Adrenal gland (tissue), 19 donors: ENCODE measurements at regions of chr9 and their contacts with region 1.

Region 1: GRCh38 chr9:131739980-131740648 is at the start of gene RAPGEF1:
- DNase-seq: peak; percentile 57 to 83 (median 68)
- H3K4me3 ChIP-seq: peak within 1 kb of the TSS in 3 of 4 donors; percentile 19 to 82 (median 29)
- H3K27ac ChIP-seq: peak within 1 kb of the TSS; percentile 47 to 99 (median 86)
- H3K4me1 ChIP-seq: peaks cover 20 to 41% of the 10 kb centered on the region in 2 donors
- H3K27me3 ChIP-seq: no peaks in the 10 kb centered on the region
- CTCF ChIP-seq: peak; percentile 34 to 100 (median 76)
- POLR2A ChIP-seq: no peak
- total RNA-seq, gene RAPGEF1: 30.7 to 136 (median 57.9) TPM

Region 2: DNA sequence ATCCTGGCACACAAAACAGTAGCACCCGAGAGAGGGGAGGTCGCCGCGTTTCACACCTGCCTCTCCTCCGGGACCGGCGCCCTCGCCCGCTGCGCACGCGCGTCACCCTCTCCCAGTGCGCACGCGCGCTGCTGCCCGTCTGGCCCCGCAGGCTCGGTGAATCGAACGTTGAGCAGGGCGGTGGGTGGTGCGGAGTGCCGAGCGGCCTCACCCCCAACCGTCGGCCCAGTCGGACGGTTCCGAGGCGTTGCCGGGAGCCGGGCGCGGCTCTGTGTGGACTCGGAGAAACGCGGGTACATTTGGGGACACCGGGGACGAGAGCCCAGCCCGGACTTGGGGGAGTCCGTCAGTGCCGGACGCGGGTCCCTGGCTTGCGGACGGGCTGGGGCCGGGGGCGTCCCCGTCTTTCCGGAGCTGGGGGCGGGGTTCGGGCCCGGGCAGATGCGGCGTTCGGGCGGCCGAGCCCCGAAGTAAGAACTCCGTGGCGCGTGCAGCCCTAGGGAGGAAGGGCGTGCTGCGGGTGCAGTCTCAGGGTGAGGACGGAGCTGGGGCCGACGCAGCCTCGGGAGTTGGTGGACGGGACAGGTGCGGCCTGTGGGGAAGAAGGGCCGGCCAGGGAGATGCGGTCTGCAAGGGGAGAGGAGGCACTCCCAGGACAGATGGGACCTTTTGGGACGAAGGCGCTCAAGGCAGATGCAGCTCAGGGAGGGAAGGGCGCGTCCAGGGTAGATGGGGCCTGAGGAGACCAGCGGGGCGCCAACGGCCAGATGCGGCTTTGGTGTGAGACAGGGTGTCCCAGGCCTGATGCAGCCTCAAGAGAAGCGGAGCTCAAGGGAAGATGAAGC is 237.1 kb before region 1 on chr9 and contains the start of gene POMT1:
- intact Hi-C with region 1: loop called in 1 of 2 experiments (anchors 10 kb)
- DNase-seq: peak; percentile 87 to 92 (median 89)
- H3K4me3 ChIP-seq: peak within 1 kb of the TSS; percentile 27 to 93 (median 91)
- H3K27ac ChIP-seq: peak within 1 kb of the TSS in 4 of 5 donors; percentile 42 to 72 (median 58)
- H3K4me1 ChIP-seq: peaks cover 9 to 11% of the 10 kb centered on the region in 2 donors
- H3K27me3 ChIP-seq: no peaks in the 10 kb centered on the region
- CTCF ChIP-seq: no peak
- POLR2A ChIP-seq: peak in 1 of 2 donors; percentile 57
- total RNA-seq, gene POMT1: 21.3 to 47.5 (median 32.5) TPM

Region 3: GRCh38 chr9:131590908-131591844 is 148.9 kb before region 1 on chr9:
- intact Hi-C with region 1: loop called (anchors 2 kb)
- DNase-seq: peak; percentile 77 to 92 (median 87)
- H3K4me3 ChIP-seq: no peak overlapping the region
- H3K27ac ChIP-seq: no peak overlapping the region
- H3K4me1 ChIP-seq: no peaks in the 10 kb centered on the region
- H3K27me3 ChIP-seq: no peaks in the 10 kb centered on the region
- CTCF ChIP-seq: peak; percentile 83 to 98 (median 94)
- POLR2A ChIP-seq: peak in 1 of 2 donors; percentile 37

Region 4: GRCh38 chr9:132814937-132815336 is 1074.8 kb after region 1 on chr9:
- intact Hi-C with region 1: no loop called
- DNase-seq: no peak
- H3K4me3 ChIP-seq: no peak overlapping the region
- H3K27ac ChIP-seq: no peak overlapping the region
- H3K4me1 ChIP-seq: no peaks in the 10 kb centered on the region
- H3K27me3 ChIP-seq: no peaks in the 10 kb centered on the region
- CTCF ChIP-seq: no peak
- POLR2A ChIP-seq: no peak